Aorta (tissue), 5 donors: ENCODE measurements at regions of chr10 and their contacts with region 1.

Region 1: DNA sequence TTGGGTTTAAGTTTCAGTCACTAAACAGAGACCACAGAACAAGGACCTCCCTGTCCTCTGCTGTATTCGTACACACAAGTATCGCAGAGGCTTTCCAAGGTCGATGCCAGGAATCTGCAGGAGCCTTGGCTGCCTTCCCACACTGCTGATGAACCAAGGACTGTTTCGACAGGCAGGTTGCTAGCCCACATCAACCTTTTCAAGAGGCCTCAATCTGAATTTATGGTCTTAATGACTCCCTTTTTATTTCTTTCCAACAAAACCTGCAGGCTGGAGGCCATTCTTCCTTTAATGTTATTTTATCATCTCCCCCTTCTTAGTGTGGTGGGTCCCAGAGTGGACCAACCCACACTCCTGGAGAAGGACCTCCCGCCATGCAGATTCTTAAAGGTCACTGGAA is 45.6 kb downstream of the JCAD start:
- DNase-seq: no peak
- ATAC-seq: no peak
- H3K4me3 ChIP-seq: no peak overlapping the region
- H3K27ac ChIP-seq: peak overlapping the region in 1 of 2 donors; percentile 56
- H3K4me1 ChIP-seq: peaks cover 11 to 12% of the 10 kb centered on the region in 2 donors
- H3K27me3 ChIP-seq: no peaks in the 10 kb centered on the region

Region 2: DNA sequence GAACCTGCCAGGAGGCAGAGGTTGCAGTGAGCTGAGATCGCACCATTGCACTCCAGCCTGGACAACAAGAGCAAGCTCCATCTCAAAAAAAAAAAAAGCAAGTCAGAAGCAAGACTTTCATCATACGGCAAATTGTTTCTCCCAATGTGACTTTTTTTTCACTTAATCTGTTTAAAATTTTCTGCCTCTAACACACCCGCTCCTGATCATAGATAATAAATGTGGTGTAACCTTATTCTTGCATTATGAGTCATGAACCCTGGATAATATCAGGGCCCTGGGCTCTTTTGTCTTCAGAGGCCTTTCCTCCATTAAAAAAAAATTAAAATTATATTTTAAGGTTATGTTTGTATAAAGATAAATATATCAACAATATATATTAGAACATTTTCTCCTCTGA is 157.1 kb after region 1 on chr10:
- intact Hi-C with region 1: no loop called
- DNase-seq: no peak
- ATAC-seq: no peak
- H3K4me3 ChIP-seq: no peak overlapping the region
- H3K27ac ChIP-seq: no peak overlapping the region
- H3K4me1 ChIP-seq: no peaks in the 10 kb centered on the region
- H3K27me3 ChIP-seq: no peaks in the 10 kb centered on the region

Region 3: DNA sequence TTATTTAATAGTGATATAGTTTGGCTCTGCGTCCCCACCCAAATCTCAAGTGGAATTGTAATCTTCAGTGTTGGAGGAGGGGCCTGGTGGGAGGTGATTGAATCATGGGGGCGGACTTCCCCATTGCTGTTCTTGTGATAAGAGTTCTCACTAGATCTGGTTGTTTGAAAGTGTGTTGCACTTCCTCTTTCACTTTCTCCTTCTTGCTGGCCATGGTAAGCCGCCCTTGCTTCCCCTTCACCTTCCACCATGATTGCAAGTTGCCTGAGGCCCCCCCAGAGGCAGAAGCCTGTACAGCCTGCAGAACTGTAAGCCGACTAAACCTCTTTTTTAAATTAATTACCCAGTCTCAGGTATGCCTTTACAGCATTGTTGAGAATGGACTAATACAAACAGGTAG is 233.9 kb after region 1 on chr10:
- intact Hi-C with region 1: loop called in 1 of 2 experiments (anchors 10 kb)
- DNase-seq: no peak
- ATAC-seq: no peak
- H3K4me3 ChIP-seq: no peak overlapping the region
- H3K27ac ChIP-seq: no peak overlapping the region
- H3K4me1 ChIP-seq: no peaks in the 10 kb centered on the region
- H3K27me3 ChIP-seq: no peaks in the 10 kb centered on the region

Region 4: GRCh38 chr10:30348378-30348776 is 334.6 kb after region 1 on chr10:
- intact Hi-C with region 1: no loop called
- DNase-seq: no peak
- ATAC-seq: no peak
- H3K4me3 ChIP-seq: peak overlapping the region; percentile 38 to 61
- H3K27ac ChIP-seq: no peak overlapping the region
- H3K4me1 ChIP-seq: peaks cover 0 to 2% of the 10 kb centered on the region in 2 donors
- H3K27me3 ChIP-seq: no peaks in the 10 kb centered on the region